ENCODE measurements at regions of chr18 and their contacts with region 1.

Region 1: GRCh38 chr18:50128506-50129271 is 66.3 kb downstream of the MYO5B start:
- DNase-seq: peak; percentile 34
- ATAC-seq: peak; percentile 84
- H3K4me3 ChIP-seq: peak overlapping the region in 1 of 3 experiments; percentile 8; a peak in 1 of 6 replicates
- H3K27ac ChIP-seq: peak overlapping the region; percentile 14
- H3K4me1 ChIP-seq: peaks cover 41% of the 10 kb centered on the region
- H3K27me3 ChIP-seq: no peaks in the 10 kb centered on the region
- CTCF ChIP-seq: no peak
- EP300 ChIP-seq: no peak
- POLR2A ChIP-seq: no peak
- RAD21 ChIP-seq: no peak

Region 2: DNA sequence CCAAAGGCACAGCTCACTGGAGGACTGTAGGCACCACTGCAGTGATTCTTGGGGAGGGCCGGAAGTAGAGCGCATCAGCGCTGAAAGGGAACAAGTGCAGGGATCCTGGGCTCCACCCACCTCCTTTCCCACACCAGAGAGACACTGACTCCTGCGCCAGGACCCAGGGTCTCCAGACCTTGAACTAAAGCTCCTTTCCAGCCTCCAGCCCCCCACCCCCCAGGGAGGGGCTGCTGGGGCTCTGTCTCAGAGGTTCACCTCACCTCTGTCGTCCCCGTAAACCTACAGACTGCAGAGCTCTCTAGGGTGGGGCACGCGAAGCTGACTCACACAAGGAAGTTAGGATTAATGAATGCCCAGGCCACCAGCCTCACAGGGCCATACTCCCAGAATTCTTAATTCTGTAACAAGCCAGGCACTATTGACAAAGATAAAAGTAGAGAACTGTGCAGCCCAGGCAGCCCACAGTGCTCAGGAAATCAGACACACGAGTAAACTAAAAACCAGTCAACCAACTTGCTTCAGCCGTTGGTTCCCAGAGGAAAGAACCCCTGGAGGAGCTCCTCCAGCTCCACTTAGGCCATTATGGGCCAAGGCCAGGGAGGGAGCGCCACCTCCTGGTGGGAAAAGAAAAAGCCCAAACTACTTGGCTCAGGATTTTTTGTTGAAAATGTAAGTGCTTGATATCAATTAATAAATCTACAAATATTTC is 270.2 kb before region 1 on chr18:
- CTCF ChIA-PET with region 1: no interaction called
- POLR2A ChIA-PET with region 1: no interaction called
- in situ Hi-C with region 1: no loop called
- intact Hi-C with region 1: no loop called
- DNase-seq: peak; percentile 44
- ATAC-seq: peak; percentile 82
- H3K4me3 ChIP-seq: no peak overlapping the region
- H3K27ac ChIP-seq: no peak overlapping the region
- H3K4me1 ChIP-seq: peaks cover 16% of the 10 kb centered on the region
- H3K27me3 ChIP-seq: no peaks in the 10 kb centered on the region
- CTCF ChIP-seq: peak; percentile 88
- EP300 ChIP-seq: no peak
- POLR2A ChIP-seq: no peak
- RAD21 ChIP-seq: peak; percentile 93

Region 3: DNA sequence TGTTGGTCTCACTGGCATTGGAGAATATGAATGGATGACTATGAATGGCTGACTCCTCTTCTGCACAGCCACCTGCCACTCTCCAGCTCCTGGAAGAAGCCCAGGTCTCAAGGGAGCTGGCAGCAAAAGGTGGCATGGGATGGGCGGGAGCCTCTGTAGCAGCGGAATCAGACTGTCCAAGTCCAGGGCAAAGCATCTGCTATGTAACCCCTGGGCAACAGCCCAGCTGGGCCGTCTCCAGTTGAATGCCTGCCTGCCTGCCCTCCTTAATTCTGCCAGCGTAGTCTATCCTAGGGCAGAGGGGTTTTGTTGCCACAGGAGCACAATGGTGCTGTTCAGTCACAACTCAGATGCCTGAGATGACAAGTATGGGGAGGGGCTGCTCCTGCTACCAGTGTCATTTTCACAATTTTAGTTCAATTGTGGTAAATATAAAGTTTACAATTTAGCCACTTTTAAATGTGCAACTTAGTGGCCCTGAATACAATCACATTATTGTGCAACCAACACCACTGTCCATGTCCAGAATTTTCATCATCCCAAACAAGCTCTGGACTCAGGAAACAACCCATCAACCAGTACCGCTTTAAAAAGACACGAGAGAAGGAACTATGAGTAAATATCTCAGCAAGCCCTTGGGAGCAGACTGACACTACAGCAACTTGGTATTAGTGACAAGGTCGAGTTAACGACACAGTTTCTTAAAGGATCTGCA is 49.0 kb before region 1 on chr18:
- CTCF ChIA-PET with region 1: no interaction called
- POLR2A ChIA-PET with region 1: no interaction called
- in situ Hi-C with region 1: no loop called
- intact Hi-C with region 1: no loop called
- DNase-seq: no peak
- ATAC-seq: no peak
- H3K4me3 ChIP-seq: no peak overlapping the region
- H3K27ac ChIP-seq: no peak overlapping the region
- H3K4me1 ChIP-seq: peaks cover 49% of the 10 kb centered on the region
- H3K27me3 ChIP-seq: no peaks in the 10 kb centered on the region
- CTCF ChIP-seq: no peak
- EP300 ChIP-seq: no peak
- POLR2A ChIP-seq: no peak
- RAD21 ChIP-seq: no peak

Region 4: GRCh38 chr18:50143295-50143694 is 14.6 kb after region 1 on chr18:
- CTCF ChIA-PET with region 1: no interaction called
- POLR2A ChIA-PET with region 1: no interaction called
- in situ Hi-C with region 1: no loop called
- intact Hi-C with region 1: no loop called
- DNase-seq: no peak
- ATAC-seq: peak; percentile 41; the same call in 1 of the 3 replicates
- H3K4me3 ChIP-seq: no peak overlapping the region
- H3K27ac ChIP-seq: no peak overlapping the region
- H3K4me1 ChIP-seq: peaks cover 22% of the 10 kb centered on the region
- H3K27me3 ChIP-seq: no peaks in the 10 kb centered on the region
- CTCF ChIP-seq: no peak
- EP300 ChIP-seq: no peak
- POLR2A ChIP-seq: no peak
- RAD21 ChIP-seq: no peak

Region 5: DNA sequence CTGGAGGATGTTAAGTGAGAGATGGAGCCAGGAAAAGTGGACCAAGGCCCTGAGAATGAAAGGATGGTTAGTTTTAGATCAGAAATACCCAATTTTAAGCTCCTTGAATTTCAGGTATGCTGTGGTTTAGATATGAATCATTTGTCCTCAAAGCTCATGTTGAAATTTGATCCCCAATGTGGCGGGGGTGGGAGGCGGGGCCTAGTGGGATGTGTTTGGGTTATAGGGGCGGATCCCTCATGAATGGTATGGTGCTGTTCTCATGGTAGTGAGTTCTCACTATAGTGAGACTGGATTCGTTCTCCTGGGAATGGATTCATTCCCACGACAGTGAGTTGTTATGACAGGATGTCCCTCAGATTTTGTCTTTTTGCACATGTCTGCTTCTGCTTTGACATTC is 54.9 kb after region 1 on chr18:
- CTCF ChIA-PET with region 1: no interaction called
- POLR2A ChIA-PET with region 1: interaction called, 3 read pairs
- in situ Hi-C with region 1: no loop called
- intact Hi-C with region 1: loop called (anchors 5 kb)
- DNase-seq: peak; percentile 25
- ATAC-seq: no peak
- H3K4me3 ChIP-seq: no peak overlapping the region
- H3K27ac ChIP-seq: no peak overlapping the region
- H3K4me1 ChIP-seq: peaks cover 22% of the 10 kb centered on the region
- H3K27me3 ChIP-seq: no peaks in the 10 kb centered on the region
- CTCF ChIP-seq: no peak
- EP300 ChIP-seq: no peak
- POLR2A ChIP-seq: no peak
- RAD21 ChIP-seq: no peak